Psoas muscle (tissue), 8 donors: ENCODE measurements at regions of chr16 and their contacts with region 1.

Region 1: GRCh38 chr16:21708533-21709115 is 44.9 kb downstream of the OTOA start:
- DNase-seq: peak; percentile 41 to 56
- ATAC-seq: peak; percentile 43 to 76 (median 58)
- H3K4me3 ChIP-seq: no peak overlapping the region
- H3K27ac ChIP-seq: no peak overlapping the region
- H3K4me1 ChIP-seq: no peaks in the 10 kb centered on the region
- H3K27me3 ChIP-seq: no peaks in the 10 kb centered on the region
- CTCF ChIP-seq: peak; percentile 82

Region 2: DNA sequence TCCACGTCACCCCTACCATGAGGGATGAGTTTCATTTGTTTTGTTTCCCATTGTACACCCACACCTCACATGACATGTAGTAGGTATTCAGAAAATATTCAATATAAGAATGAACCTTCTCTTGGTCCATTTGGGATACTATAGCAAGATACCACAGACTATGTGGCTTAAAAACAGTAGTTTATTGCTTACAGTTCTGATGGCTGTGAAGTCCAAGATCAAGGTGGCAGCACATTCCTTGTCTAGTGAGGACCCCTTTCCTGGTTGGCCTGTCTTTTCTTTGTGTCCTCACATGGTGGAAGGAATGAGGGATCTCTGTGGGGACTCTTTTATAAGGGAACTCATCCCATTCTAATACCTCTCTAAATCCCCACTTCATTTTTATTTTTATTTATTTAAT is 394.3 kb before region 1 on chr16:
- intact Hi-C with region 1: no loop called
- DNase-seq: no peak
- ATAC-seq: no peak
- H3K4me3 ChIP-seq: no peak overlapping the region
- H3K27ac ChIP-seq: no peak overlapping the region
- H3K4me1 ChIP-seq: no peaks in the 10 kb centered on the region
- H3K27me3 ChIP-seq: peaks cover 0 to 7% (median 0%) of the 10 kb centered on the region in 3 donors
- CTCF ChIP-seq: no peak

Region 3: DNA sequence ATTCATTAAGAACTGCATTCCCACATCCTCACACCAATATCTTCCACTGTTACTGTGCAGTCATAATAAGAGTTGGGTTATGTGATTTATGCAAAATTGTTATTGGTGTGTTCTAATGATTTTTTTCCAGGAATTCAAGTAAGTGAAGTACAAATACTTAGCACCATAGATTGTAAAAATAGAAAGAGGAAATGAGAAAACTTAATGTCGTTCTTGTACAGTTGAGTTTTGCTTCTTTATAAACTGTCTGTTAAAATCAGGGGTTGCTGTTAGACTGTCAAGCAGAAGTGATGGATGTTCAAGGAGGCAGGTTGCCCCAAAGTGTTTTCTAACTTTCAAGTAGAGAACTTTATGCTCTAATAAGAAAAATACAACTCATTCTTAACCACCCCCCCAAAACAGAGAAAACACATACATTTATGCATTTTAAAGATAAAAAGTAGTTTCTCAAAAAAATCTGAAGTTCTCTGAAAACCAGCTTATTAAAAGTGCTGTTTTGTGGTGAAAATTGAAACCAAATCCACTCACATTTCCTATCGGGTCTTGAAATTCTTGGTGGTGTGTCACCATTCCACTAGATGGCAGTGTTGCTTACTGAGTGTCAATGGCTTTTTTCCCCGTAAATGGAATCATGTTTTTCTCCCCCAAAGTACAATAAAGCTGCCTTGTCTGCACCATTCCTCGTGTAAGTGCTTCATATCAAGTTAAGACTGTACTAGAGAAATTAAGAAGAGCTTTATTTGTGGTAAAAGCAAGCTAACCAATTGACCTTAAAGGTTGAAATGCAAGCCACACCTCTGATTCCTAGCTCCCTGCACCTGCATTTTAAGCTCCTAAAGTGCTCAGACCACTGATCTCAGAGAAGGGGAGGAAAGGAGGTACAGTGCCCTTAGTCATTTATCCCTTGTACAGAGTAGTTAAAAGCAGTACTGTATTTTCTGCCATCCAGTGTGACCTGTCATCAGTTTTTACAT is 51.5 kb before region 1 on chr16:
- intact Hi-C with region 1: loop called (anchors 2 to 5 kb)
- DNase-seq: no peak
- ATAC-seq: peak in 2 of 4 donors; percentile 45 to 49
- H3K4me3 ChIP-seq: no peak overlapping the region
- H3K27ac ChIP-seq: no peak overlapping the region
- H3K4me1 ChIP-seq: peaks cover 3% of the 10 kb centered on the region
- H3K27me3 ChIP-seq: no peaks in the 10 kb centered on the region
- CTCF ChIP-seq: peak; percentile 77

Region 4: GRCh38 chr16:21684199-21684598 is 24.4 kb before region 1 on chr16:
- intact Hi-C with region 1: no loop called
- DNase-seq: no peak
- ATAC-seq: no peak
- H3K4me3 ChIP-seq: no peak overlapping the region
- H3K27ac ChIP-seq: no peak overlapping the region
- H3K4me1 ChIP-seq: no peaks in the 10 kb centered on the region
- H3K27me3 ChIP-seq: peaks cover 0 to 5% (median 0%) of the 10 kb centered on the region in 3 donors
- CTCF ChIP-seq: peak; percentile 11

Region 5: GRCh38 chr16:22123146-22123545 is 414.5 kb after region 1 on chr16:
- intact Hi-C with region 1: no loop called
- DNase-seq: no peak
- ATAC-seq: no peak
- H3K4me3 ChIP-seq: no peak overlapping the region
- H3K27ac ChIP-seq: no peak overlapping the region
- H3K4me1 ChIP-seq: no peaks in the 10 kb centered on the region
- H3K27me3 ChIP-seq: no peaks in the 10 kb centered on the region
- CTCF ChIP-seq: no peak